Activated naive CD4-positive, alpha-beta T cell treated with anti-CD3 and anti-CD28 coated beads for 36 hours (primary cell): ENCODE measurements at regions of chr20 and their contacts with region 1.

Region 1: DNA sequence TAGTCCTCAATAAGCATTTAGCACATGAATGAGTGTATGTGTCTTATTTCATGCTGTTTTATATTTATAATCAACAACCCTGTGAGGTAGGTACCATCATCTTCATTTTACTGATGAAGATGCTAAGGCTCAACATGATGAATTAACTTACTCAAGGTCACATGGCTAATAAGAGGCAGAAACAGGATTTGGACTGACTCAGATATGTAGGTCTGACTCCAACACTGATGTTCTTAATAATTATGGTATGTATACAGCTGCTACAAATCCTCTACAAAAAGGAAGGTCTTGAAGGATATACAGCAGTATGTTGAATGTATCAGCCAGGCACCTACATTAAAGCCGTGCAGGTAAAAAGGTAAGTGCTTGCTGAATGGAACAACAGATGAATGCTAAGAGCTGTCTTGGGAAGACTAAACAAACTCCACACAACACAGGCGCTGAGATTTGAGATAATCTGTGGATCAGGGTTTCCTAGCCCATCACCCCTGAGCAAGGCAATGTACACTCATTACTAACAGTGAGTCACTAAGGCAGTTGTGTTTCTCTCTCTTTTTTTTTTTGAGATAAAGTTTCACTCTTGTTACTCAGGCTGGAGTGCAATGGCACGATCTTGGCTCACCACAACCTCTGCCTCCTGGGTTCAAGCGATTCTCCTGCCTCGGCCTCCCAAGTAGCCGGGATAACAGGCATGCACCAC is 31.9 kb downstream of the TTI1 start:
- DNase-seq: peak; percentile 30
- H3K4me3 Mint-ChIP-seq: no peak overlapping the region
- H3K27ac Mint-ChIP-seq: peak overlapping the region; percentile 6
- H3K4me1 Mint-ChIP-seq: peaks cover 37% of the 10 kb centered on the region
- H3K27me3 Mint-ChIP-seq: no peaks in the 10 kb centered on the region

Region 2: GRCh38 chr20:37922016-37922415 is 79.3 kb before region 1 on chr20:
- CTCF ChIA-PET with region 1: no interaction called
- intact Hi-C with region 1: loop called (anchors 5 kb)
- DNase-seq: peak; percentile 67
- H3K4me3 Mint-ChIP-seq: no peak overlapping the region
- H3K27ac Mint-ChIP-seq: no peak overlapping the region
- H3K4me1 Mint-ChIP-seq: peaks cover 11% of the 10 kb centered on the region
- H3K27me3 Mint-ChIP-seq: no peaks in the 10 kb centered on the region

Region 3: DNA sequence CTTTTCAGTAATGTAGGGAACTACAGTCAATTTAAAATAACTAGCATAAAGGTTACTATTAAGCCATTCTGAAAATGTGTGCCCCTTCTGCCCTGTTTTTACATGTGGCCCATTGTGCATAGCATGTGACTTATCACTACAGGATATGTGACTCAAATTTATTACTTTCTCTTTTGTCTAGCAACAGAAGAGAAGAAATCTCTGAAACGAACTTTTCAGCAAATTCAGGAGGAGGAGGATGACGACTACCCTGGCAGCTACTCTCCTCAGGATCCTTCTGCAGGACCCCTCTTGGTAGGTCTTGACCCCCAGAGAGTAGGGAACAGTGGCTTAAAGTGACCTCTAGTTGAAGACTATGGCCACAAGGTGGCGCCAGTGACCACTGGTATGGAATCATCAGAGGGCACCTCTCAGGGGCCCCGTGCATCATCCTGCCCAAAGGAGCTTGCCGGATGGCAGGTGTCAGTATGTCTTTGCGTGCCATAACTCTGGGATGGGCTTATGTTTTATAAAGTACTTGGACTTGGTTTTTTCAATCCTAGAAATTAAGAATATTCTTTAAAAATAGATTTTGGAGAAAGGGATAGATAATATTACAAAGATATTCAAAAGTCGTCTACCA is 56.1 kb after region 1 on chr20:
- CTCF ChIA-PET with region 1: interaction called, 3 read pairs
- intact Hi-C with region 1: loop called (anchors 10 kb)
- DNase-seq: peak; percentile 82
- H3K4me3 Mint-ChIP-seq: no peak overlapping the region
- H3K27ac Mint-ChIP-seq: peak overlapping the region; percentile 73
- H3K4me1 Mint-ChIP-seq: peaks cover 40% of the 10 kb centered on the region
- H3K27me3 Mint-ChIP-seq: no peaks in the 10 kb centered on the region